HepG2 (cell line): ENCODE measurements at regions of chr1 and their contacts with region 1.

Region 1: DNA sequence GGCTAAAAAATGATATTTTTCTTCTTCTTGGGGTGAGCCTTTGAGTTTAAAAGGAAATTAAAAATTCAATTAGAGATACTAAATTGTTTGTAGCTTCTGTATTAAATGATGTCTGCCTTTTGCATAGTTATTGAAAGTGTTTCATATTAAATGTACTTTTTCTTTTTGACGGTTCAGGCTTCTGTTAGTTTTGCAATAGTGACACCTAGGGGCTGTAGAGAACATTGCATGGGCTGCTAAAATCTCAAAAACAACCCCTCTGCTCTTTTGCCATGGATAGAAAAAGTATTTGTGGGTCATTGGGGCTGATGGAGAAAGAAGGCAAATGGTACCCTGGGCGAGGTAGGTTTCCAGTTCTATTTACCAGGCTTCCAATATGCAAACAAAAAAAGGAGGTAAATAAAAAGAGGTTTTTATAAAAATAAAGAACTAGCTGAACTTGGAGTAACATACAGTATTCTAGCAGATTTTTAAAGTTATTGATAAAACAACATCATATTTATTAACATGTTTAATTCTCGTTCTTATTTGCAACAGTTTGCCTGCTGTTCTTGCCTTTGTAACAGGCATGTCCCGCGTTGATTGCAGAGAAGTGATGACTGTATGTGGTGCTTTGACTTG is 115.4 kb upstream of the HOOK1 start:
- DNase-seq: peak; percentile 48
- ATAC-seq: no peak
- H3K4me3 ChIP-seq: no peak overlapping the region
- H3K27ac ChIP-seq: peak overlapping the region; percentile 44
- H3K4me1 ChIP-seq: peaks cover 37% of the 10 kb centered on the region
- H3K27me3 ChIP-seq: no peaks in the 10 kb centered on the region
- CTCF ChIP-seq: peak; percentile 79
- EP300 ChIP-seq: no peak
- POLR2A ChIP-seq: no peak
- RAD21 ChIP-seq: peak; percentile 72

Region 2: DNA sequence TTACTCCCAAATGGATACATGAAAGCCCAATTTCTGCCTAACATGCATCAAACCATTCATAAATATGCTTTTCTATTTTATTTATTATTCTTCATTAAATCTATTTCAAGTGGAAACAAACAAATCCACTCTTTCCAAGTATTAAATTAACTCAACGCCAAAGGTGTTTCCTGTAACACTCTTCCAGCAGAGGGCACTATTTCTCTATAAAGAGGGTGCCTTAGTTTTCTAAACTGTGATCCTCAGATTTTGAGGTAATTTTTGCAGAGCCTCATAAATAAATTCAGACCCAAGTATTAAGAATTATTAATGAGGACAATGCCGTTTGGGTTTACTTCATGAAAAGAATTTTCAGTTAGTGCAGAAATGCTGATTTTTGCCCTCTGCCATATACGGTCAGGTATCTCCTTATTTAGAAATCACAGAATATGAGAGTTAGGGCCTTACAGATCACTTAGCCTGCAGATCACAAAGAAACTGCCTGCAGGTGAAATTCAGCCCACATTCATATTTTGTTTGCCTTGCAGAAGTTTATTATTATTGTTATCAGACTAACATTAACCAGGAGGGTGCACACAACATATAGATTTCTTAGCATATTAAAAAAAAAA is 959.4 kb before region 1 on chr1:
- CTCF ChIA-PET with region 1: interaction called, 6 read pairs
- POLR2A ChIA-PET with region 1: no interaction called
- in situ Hi-C with region 1: no loop called
- intact Hi-C with region 1: loop called (anchors 1 kb)
- DNase-seq: peak; percentile 52
- ATAC-seq: no peak
- H3K4me3 ChIP-seq: no peak overlapping the region
- H3K27ac ChIP-seq: no peak overlapping the region
- H3K4me1 ChIP-seq: peaks cover 17% of the 10 kb centered on the region
- H3K27me3 ChIP-seq: peaks cover 0 to 7% of the 10 kb centered on the region in 2 experiments; a peak in 1 of 5 replicates
- CTCF ChIP-seq: peak; percentile 78
- EP300 ChIP-seq: no peak
- POLR2A ChIP-seq: no peak
- RAD21 ChIP-seq: peak; percentile 80; the same call in 1 of the 2 replicates

Region 3: GRCh38 chr1:59522925-59523505 is 176.3 kb before region 1 on chr1:
- CTCF ChIA-PET with region 1: no interaction called
- POLR2A ChIA-PET with region 1: interaction called, 3 read pairs
- in situ Hi-C with region 1: no loop called
- intact Hi-C with region 1: loop called (anchors 1 kb)
- DNase-seq: peak; percentile 93
- ATAC-seq: peak; percentile 93
- H3K4me3 ChIP-seq: no peak overlapping the region
- H3K27ac ChIP-seq: peak overlapping the region; percentile 57
- H3K4me1 ChIP-seq: peaks cover 32% of the 10 kb centered on the region
- H3K27me3 ChIP-seq: no peaks in the 10 kb centered on the region
- CTCF ChIP-seq: peak; percentile 59
- EP300 ChIP-seq: peak; percentile 16 to 82; a peak in 2 of 4 replicates
- POLR2A ChIP-seq: no peak
- RAD21 ChIP-seq: peak; percentile 38

Region 4: DNA sequence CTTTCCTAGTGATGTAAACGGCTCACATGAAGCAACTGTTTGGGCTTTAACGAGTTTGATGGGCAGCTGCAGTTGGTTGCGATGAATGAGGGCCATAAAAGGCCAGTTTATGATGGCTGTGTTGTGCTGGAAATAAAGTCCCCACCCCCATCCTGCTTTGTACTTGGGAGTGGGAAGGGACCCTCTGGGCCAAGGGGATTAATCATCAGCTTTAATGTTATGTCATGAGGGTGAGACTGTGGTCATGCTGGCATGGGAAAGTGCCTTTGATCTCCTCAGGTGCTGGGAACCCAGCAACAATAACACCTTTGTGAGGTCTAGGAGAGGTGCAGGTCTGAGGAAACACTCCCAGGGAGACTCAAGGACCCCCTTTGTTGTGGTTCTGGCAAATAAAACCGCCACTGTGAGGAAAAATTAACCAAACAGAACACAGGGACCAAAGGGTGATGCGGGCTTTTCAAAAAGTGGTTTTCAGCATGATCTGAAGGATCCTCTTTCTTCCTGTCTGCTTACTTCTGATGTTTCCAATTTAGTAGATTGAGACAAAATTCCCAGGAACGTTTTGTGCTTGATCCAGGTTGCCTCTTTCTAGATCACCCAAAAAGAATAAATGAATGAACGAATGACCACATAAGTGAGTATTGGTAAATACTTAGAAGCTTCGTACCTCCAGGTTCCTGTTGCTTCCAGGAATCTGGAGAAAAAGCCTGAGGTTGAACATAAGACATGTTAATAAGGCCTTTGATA is 142.4 kb before region 1 on chr1:
- CTCF ChIA-PET with region 1: no interaction called
- POLR2A ChIA-PET with region 1: no interaction called
- in situ Hi-C with region 1: no loop called
- intact Hi-C with region 1: loop called (anchors 1 kb)
- DNase-seq: peak; percentile 100
- ATAC-seq: peak; percentile 95
- H3K4me3 ChIP-seq: no peak overlapping the region
- H3K27ac ChIP-seq: peak overlapping the region; percentile 74
- H3K4me1 ChIP-seq: peaks cover 76% of the 10 kb centered on the region
- H3K27me3 ChIP-seq: no peaks in the 10 kb centered on the region
- CTCF ChIP-seq: no peak
- EP300 ChIP-seq: peak; percentile 96 to 99; a peak in 3 of 4 replicates
- POLR2A ChIP-seq: no peak
- RAD21 ChIP-seq: 0 out of 2 replicates have a peak, but pooled peaks have one; percentile 8

Region 5: GRCh38 chr1:59593798-59594790 is 105.2 kb before region 1 on chr1:
- CTCF ChIA-PET with region 1: no interaction called
- POLR2A ChIA-PET with region 1: interaction called, 13 read pairs
- in situ Hi-C with region 1: no loop called
- intact Hi-C with region 1: no loop called
- DNase-seq: peak; percentile 65
- ATAC-seq: peak; percentile 86
- H3K4me3 ChIP-seq: peak overlapping the region in 2 of 3 experiments; percentile 3 to 35; a peak in 2 of 6 replicates
- H3K27ac ChIP-seq: peak overlapping the region; percentile 70
- H3K4me1 ChIP-seq: peaks cover 40% of the 10 kb centered on the region
- H3K27me3 ChIP-seq: no peaks in the 10 kb centered on the region
- CTCF ChIP-seq: no peak
- EP300 ChIP-seq: peak in 1 of 2 experiments; percentile 57; a peak in 2 of 4 replicates
- POLR2A ChIP-seq: no peak
- RAD21 ChIP-seq: no peak

Region 6: DNA sequence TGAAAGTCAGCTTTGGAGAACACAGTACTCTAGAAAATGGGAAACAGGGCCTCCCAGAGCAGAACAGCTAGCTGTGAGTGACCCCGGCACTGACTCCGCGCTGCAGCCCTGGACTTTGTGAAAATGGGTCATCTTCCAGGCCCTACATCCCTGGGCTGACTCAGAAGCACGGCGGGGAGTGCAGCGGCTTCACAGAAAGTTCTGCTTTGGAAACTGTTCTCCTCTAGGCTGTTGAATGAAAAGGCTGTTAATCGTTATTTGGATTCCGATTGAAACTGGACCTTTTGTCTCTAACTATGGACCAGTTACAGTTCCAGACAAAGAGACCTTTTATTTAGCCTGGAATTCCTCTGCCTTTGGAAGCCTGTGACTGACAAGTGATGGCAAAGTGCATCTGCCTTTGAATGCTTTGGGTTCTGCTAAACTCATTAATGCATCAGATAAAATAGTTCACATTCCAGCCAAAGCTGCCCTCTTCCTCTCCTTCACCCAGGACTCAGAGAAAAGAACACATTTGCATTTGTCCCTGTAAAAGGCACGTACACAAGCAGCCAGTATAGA is 29.5 kb before region 1 on chr1:
- CTCF ChIA-PET with region 1: no interaction called
- POLR2A ChIA-PET with region 1: no interaction called
- in situ Hi-C with region 1: no loop called
- intact Hi-C with region 1: loop called (anchors 1 kb)
- DNase-seq: peak; percentile 99
- ATAC-seq: peak; percentile 96
- H3K4me3 ChIP-seq: no peak overlapping the region; a peak in 2 of 6 replicates
- H3K27ac ChIP-seq: peak overlapping the region; percentile 82
- H3K4me1 ChIP-seq: peaks cover 88% of the 10 kb centered on the region
- H3K27me3 ChIP-seq: no peaks in the 10 kb centered on the region
- CTCF ChIP-seq: no peak
- EP300 ChIP-seq: peak in 1 of 2 experiments; percentile 78; a peak in 2 of 4 replicates
- POLR2A ChIP-seq: no peak
- RAD21 ChIP-seq: no peak